ENCODE measurements at regions of chr3 and their contacts with region 1.

Region 1: DNA sequence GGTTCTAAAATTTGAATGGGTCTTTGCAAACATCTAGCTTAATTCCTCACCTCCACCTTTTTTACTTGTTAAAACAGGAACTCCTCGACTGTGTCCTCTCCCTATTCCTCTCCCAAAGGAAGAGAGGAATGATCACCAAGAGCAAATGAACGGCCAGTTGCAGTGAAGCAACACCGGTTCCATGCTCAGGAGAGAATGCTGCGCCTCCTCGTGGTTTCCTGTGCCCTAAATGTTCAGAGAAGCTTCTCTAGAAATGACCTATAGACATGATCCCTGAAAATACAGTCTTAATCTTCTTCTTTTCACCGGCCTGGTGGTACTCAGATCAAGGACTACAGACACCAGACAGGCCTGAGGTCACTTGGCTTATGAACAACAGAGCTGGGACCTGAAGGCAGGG is 65.1 kb upstream of the GUCA1C start:
- DNase-seq: no peak
- ATAC-seq: no peak

Region 2: DNA sequence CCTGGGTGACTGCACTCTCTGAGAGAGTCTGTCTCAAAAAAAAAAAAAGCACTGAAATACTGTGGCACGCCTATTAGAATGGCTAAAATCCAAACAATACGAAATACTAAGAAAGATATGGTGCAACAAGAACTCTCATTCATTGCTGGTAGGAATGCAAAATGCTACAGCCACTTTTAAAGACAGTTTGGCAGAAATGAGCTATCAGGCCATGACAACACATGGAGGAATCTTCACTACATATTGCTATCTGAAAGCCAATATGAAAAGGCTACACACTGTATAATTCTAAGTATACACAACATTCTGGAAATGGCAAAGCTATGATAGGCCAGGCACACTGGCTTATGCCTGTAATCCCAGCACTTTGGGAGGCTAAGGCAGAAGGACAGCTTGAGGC is 278.7 kb after region 1 on chr3:
- intact Hi-C with region 1: loop called (anchors 5 kb)
- DNase-seq: no peak
- ATAC-seq: no peak